Activated CD8-positive, alpha-beta memory T cell treated with anti-CD3 and anti-CD28 coated beads, Interleukin-2, amount 10 ng/mL, durations not matched to agents 7 days and 5 days (primary cell): ENCODE measurements at regions of chr14 and their contacts with region 1.

Region 1: DNA sequence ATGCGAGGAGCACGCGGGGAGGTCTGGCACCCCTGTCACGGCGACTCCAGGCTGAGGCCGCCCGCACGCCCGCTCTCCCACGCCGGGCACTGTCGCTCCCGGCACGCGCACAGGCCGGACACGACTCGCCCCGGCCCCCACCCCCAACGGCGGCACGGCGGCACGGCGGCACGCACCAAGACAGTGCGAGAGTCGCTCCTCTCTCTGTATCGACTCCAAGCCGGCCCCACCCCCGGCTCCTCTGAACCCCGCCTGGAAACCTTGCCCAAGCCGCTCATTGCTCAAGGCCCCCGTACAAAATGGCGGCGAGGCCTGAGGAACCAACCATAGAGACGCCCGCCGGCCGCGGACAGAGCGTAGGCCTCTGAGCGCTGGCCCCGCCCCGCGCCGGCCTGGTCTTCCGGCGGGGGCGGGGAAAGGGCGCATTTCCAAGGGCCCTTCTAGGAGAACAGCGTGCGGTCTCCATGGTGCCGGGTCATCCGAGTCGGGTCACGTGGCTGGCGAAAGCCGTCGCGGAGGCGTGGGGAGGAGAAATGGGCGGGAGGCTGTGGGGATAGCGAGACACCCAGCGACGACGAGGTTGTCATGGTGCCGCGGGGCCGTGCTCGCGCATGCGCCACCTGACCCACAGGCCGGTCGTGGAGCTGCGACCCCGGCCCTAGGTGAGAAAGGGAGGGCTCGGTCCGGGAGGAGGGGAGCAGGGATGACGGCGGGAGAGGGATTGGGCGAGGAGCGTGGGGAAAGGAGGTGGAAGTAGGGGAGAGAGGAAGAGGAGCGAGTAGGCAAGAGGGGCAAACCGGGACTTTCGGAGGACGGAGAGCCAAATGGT is at the start of gene CIPC:
- DNase-seq: peak; percentile 100
- ATAC-seq: peak; percentile 92
- H3K4me3 Mint-ChIP-seq: peak within 1 kb of the TSS; percentile 88
- H3K27ac Mint-ChIP-seq: peak within 1 kb of the TSS; percentile 92
- H3K4me1 Mint-ChIP-seq: peaks cover 37% of the 10 kb centered on the region
- H3K27me3 Mint-ChIP-seq: no peaks in the 10 kb centered on the region
- total RNA-seq, gene CIPC: 11.3 to 12.0 TPM

Region 2: GRCh38 chr14:77086017-77086736 is 11.7 kb before region 1 on chr14:
- CTCF ChIA-PET with region 1: interaction called, 14 read pairs
- DNase-seq: no peak
- ATAC-seq: peak; percentile 42
- H3K4me3 Mint-ChIP-seq: no peak overlapping the region
- H3K27ac Mint-ChIP-seq: no peak overlapping the region
- H3K4me1 Mint-ChIP-seq: peaks cover 7% of the 10 kb centered on the region
- H3K27me3 Mint-ChIP-seq: peaks cover 23% of the 10 kb centered on the region

Region 3: DNA sequence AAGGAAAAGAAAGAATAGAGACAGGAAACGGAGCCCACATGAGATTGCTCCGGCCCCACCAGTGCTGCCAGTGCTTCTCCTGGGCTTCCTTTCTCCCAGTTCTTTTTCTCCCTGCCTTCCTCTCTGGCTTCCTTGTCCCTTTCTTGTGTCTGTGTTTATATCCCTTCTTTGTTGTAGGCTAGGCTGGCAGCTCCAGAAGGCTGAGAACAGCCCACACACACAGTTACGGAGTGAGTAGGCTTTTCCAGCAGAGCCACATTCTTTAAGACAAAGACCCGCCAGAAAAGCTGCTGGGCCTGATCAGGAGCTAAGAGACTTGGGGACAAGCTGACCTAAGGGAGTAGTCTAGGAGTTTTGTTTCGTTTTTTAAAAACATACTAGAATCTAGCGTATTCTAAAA is 13.1 kb after region 1 on chr14:
- CTCF ChIA-PET with region 1: interaction called, 24 read pairs
- DNase-seq: no peak
- ATAC-seq: no peak
- H3K4me3 Mint-ChIP-seq: no peak overlapping the region
- H3K27ac Mint-ChIP-seq: no peak overlapping the region
- H3K4me1 Mint-ChIP-seq: no peaks in the 10 kb centered on the region
- H3K27me3 Mint-ChIP-seq: no peaks in the 10 kb centered on the region

Region 4: GRCh38 chr14:77124345-77125280 is 26.7 kb after region 1 on chr14:
- CTCF ChIA-PET with region 1: interaction called, 13 read pairs
- DNase-seq: peak; percentile 58
- ATAC-seq: peak; percentile 85
- H3K4me3 Mint-ChIP-seq: peak overlapping the region; percentile 62
- H3K27ac Mint-ChIP-seq: no peak overlapping the region
- H3K4me1 Mint-ChIP-seq: peaks cover 35% of the 10 kb centered on the region
- H3K27me3 Mint-ChIP-seq: peaks cover 46% of the 10 kb centered on the region

Region 5: DNA sequence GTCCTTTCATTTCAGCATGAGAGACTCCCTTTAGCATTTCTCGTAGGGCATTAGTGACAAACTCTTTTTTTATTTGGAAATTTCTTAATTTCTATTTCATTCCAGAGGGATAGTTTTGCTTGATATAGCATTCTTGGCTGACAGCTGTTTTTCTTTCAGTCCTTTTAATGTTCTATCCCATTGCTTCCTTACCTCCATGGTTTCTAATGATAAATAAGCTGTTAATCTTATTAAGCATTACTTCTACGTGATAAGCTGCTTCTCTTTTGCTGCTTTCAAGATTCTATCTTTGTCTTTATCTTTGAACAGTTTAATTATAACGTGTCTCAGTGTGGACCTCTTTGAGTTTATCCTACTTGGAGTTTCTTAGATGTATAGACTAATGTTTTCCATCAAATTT is 72.1 kb after region 1 on chr14:
- CTCF ChIA-PET with region 1: no interaction called
- DNase-seq: no peak
- ATAC-seq: no peak
- H3K4me3 Mint-ChIP-seq: no peak overlapping the region
- H3K27ac Mint-ChIP-seq: no peak overlapping the region
- H3K4me1 Mint-ChIP-seq: no peaks in the 10 kb centered on the region
- H3K27me3 Mint-ChIP-seq: peaks cover 41% of the 10 kb centered on the region

Region 6: GRCh38 chr14:77186911-77187648 is 89.2 kb after region 1 on chr14:
- CTCF ChIA-PET with region 1: no interaction called
- DNase-seq: no peak
- ATAC-seq: no peak
- H3K4me3 Mint-ChIP-seq: no peak overlapping the region
- H3K27ac Mint-ChIP-seq: no peak overlapping the region
- H3K4me1 Mint-ChIP-seq: peaks cover 13% of the 10 kb centered on the region
- H3K27me3 Mint-ChIP-seq: peaks cover 40% of the 10 kb centered on the region

Region 7: GRCh38 chr14:77248666-77249065 is 150.8 kb after region 1 on chr14:
- CTCF ChIA-PET with region 1: no interaction called
- DNase-seq: no peak
- ATAC-seq: no peak
- H3K4me3 Mint-ChIP-seq: no peak overlapping the region
- H3K27ac Mint-ChIP-seq: no peak overlapping the region
- H3K4me1 Mint-ChIP-seq: no peaks in the 10 kb centered on the region
- H3K27me3 Mint-ChIP-seq: peaks cover under 1% of the 10 kb centered on the region